Caco-2 (cell line): ENCODE measurements at regions of chr12 and their contacts with region 1.

Region 1: GRCh38 chr12:56266693-56267442 is at the start of gene COQ10A:
- DNase-seq: peak; percentile 90 to 92
- H3K4me3 ChIP-seq: peak within 1 kb of the TSS; percentile 65
- H3K4me3 Mint-ChIP-seq: peak within 1 kb of the TSS; percentile 83
- H3K27ac Mint-ChIP-seq: peak within 1 kb of the TSS; percentile 61
- H3K4me1 ChIP-seq: peaks cover 12% of the 10 kb centered on the region
- H3K4me1 Mint-ChIP-seq: peaks cover 12% of the 10 kb centered on the region
- H3K27me3 ChIP-seq: no peaks in the 10 kb centered on the region
- H3K27me3 Mint-ChIP-seq: no peaks in the 10 kb centered on the region
- CTCF ChIP-seq: peak; percentile 39 to 74
- total RNA-seq, gene COQ10A: 16.7 and 18.4 TPM in 2 replicates

Region 2: GRCh38 chr12:56127888-56128669 is 138.8 kb before region 1 on chr12 and contains the start of gene ESYT1:
- CTCF ChIA-PET with region 1: no interaction called
- POLR2A ChIA-PET with region 1: no interaction called
- intact Hi-C with region 1: loop called (anchors 2 kb)
- DNase-seq: peak; percentile 99
- H3K4me3 ChIP-seq: peak within 1 kb of the TSS; percentile 75
- H3K4me3 Mint-ChIP-seq: peak within 1 kb of the TSS; percentile 89
- H3K27ac Mint-ChIP-seq: peak within 1 kb of the TSS; percentile 91
- H3K4me1 ChIP-seq: peaks cover 29% of the 10 kb centered on the region
- H3K4me1 Mint-ChIP-seq: peaks cover 35% of the 10 kb centered on the region
- H3K27me3 ChIP-seq: no peaks in the 10 kb centered on the region
- H3K27me3 Mint-ChIP-seq: no peaks in the 10 kb centered on the region
- CTCF ChIP-seq: no peak
- total RNA-seq, gene ESYT1: 70.4 and 79.0 TPM in 2 replicates

Region 3: GRCh38 chr12:56224102-56224701 is 42.7 kb before region 1 on chr12 and contains the start of gene NABP2:
- CTCF ChIA-PET with region 1: interaction called, 13 read pairs
- POLR2A ChIA-PET with region 1: interaction called, 12 read pairs
- intact Hi-C with region 1: no loop called
- DNase-seq: peak; percentile 98
- H3K4me3 ChIP-seq: peak within 1 kb of the TSS; percentile 72
- H3K4me3 Mint-ChIP-seq: peak within 1 kb of the TSS; percentile 99
- H3K27ac Mint-ChIP-seq: peak within 1 kb of the TSS; percentile 98
- H3K4me1 ChIP-seq: peaks cover 6% of the 10 kb centered on the region
- H3K4me1 Mint-ChIP-seq: peaks cover under 1% of the 10 kb centered on the region
- H3K27me3 ChIP-seq: no peaks in the 10 kb centered on the region
- H3K27me3 Mint-ChIP-seq: no peaks in the 10 kb centered on the region
- CTCF ChIP-seq: peak; percentile 82 to 89
- total RNA-seq, gene NABP2: 32.1 and 37.7 TPM in 2 replicates

Region 4: GRCh38 chr12:56243731-56244181 is 23.1 kb before region 1 on chr12:
- CTCF ChIA-PET with region 1: no interaction called
- POLR2A ChIA-PET with region 1: no interaction called
- intact Hi-C with region 1: no loop called
- DNase-seq: no peak
- H3K4me3 ChIP-seq: no peak overlapping the region
- H3K4me3 Mint-ChIP-seq: no peak overlapping the region
- H3K27ac Mint-ChIP-seq: no peak overlapping the region
- H3K4me1 ChIP-seq: peaks cover 8% of the 10 kb centered on the region; the same call in 1 of the 2 replicates
- H3K4me1 Mint-ChIP-seq: peaks cover 17% of the 10 kb centered on the region
- H3K27me3 ChIP-seq: no peaks in the 10 kb centered on the region
- H3K27me3 Mint-ChIP-seq: no peaks in the 10 kb centered on the region
- CTCF ChIP-seq: no peak

Region 5: DNA sequence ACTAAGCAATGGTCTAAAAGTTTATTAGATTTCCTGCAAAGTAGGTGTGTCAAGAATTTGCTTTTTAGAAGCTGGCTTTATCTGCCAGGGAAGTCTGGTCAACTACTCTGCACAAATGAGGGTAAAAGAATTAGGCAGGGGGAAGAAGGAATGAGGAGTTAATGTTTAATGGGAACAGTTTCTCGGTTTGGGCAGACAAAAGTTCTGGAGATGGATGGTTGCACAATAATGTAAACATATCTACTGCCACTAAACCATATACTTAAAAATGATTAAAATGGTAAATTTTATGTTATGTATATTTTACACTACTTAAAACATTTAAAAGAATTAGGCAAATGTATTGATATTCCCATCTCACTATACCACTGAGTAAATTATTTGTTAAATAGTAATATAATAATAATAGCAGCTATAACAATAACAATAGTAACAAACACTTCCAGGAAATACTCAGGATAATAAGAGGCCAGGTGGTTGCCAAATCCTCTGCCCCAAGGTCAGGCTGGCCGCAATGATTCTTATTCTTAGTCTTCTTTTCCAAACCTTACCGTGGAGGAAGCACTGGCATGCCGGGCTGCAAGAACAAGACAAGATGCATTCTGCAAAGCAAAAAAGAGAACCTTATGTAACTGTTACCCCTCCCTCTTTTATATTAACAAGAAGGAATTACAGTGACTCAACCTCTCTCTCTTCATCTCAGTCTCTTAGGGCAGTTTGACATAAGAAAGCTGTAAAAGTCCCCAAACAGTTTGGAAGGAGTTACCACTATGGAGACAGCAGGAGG is 19.4 kb after region 1 on chr12:
- CTCF ChIA-PET with region 1: interaction called, 5 read pairs
- POLR2A ChIA-PET with region 1: interaction called, 5 read pairs
- intact Hi-C with region 1: loop called (anchors 2 kb)
- DNase-seq: no peak
- H3K4me3 ChIP-seq: no peak overlapping the region
- H3K4me3 Mint-ChIP-seq: peak overlapping the region; percentile 1
- H3K27ac Mint-ChIP-seq: peak overlapping the region; percentile 58
- H3K4me1 ChIP-seq: peaks cover 24% of the 10 kb centered on the region
- H3K4me1 Mint-ChIP-seq: peaks cover 21% of the 10 kb centered on the region
- H3K27me3 ChIP-seq: no peaks in the 10 kb centered on the region
- H3K27me3 Mint-ChIP-seq: no peaks in the 10 kb centered on the region
- CTCF ChIP-seq: no peak

Region 6: GRCh38 chr12:56315622-56316473 is 49.0 kb after region 1 on chr12 and contains the start of gene CNPY2:
- CTCF ChIA-PET with region 1: interaction called, 3 read pairs
- POLR2A ChIA-PET with region 1: interaction called, 3 read pairs
- intact Hi-C with region 1: loop called (anchors 1 kb)
- DNase-seq: peak; percentile 98 to 99
- H3K4me3 ChIP-seq: peak within 1 kb of the TSS; percentile 79
- H3K4me3 Mint-ChIP-seq: peak within 1 kb of the TSS; percentile 85
- H3K27ac Mint-ChIP-seq: peak within 1 kb of the TSS; percentile 96
- H3K4me1 ChIP-seq: peaks cover 4% of the 10 kb centered on the region; the same call in 1 of the 2 replicates
- H3K4me1 Mint-ChIP-seq: no peaks in the 10 kb centered on the region
- H3K27me3 ChIP-seq: no peaks in the 10 kb centered on the region
- H3K27me3 Mint-ChIP-seq: no peaks in the 10 kb centered on the region
- CTCF ChIP-seq: peak; percentile 22 to 27
- total RNA-seq, gene CNPY2: 204 and 208 TPM in 2 replicates

Region 7: GRCh38 chr12:56636675-56637540 is 370.0 kb after region 1 on chr12:
- CTCF ChIA-PET with region 1: no interaction called
- POLR2A ChIA-PET with region 1: no interaction called
- intact Hi-C with region 1: no loop called
- DNase-seq: peak; percentile 98 to 99
- H3K4me3 ChIP-seq: peak overlapping the region; percentile 85
- H3K4me3 Mint-ChIP-seq: peak overlapping the region; percentile 98
- H3K27ac Mint-ChIP-seq: peak overlapping the region; percentile 92
- H3K4me1 ChIP-seq: peaks cover 23% of the 10 kb centered on the region
- H3K4me1 Mint-ChIP-seq: peaks cover 6% of the 10 kb centered on the region
- H3K27me3 ChIP-seq: no peaks in the 10 kb centered on the region
- H3K27me3 Mint-ChIP-seq: no peaks in the 10 kb centered on the region
- CTCF ChIP-seq: peak; percentile 57 to 80